ENCODE measurements at regions of chr11 and their contacts with region 1.

Region 1: GRCh38 chr11:64148200-64148916 is 17.6 kb downstream of the MACROD1 start:
- DNase-seq: peak; percentile 80 to 98 (median 92)

Region 2: GRCh38 chr11:64000026-64000739 is 148.2 kb before region 1 on chr11:
- intact Hi-C with region 1: loop called (anchors 1 kb)
- DNase-seq: peak in 9 of 10 donors; percentile 58 to 96 (median 73)

Region 3: GRCh38 chr11:64036087-64037026 is 112.0 kb before region 1 on chr11:
- intact Hi-C with region 1: loop called (anchors 1 kb)
- DNase-seq: peak in 9 of 10 donors; percentile 33 to 91 (median 57)

Region 4: DNA sequence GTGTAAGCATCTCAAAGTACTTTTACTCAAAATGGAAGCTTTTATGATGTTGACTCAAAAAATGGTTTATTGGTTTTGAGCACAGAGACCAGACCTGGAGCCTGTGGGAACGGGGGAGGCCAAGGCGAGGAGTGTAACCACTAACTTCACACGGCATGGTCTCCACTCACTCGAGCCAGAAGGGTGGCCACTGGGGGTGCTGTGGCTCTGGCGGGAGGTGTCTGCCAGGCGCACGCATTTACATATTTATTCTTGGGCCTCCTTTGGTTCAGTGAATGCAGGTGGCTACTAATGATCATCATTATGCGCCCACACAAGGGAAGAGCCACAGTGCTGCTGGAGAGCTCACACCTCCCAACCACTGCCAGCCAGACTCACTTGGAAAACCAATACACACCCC is 48.0 kb before region 1 on chr11:
- intact Hi-C with region 1: loop called (anchors 5 kb)
- DNase-seq: peak in 5 of 10 donors; percentile 48 to 94 (median 55)